ENCODE measurements at regions of chr21 and their contacts with region 1.

Region 1: GRCh38 chr21:34745557-34746255 is 76.9 kb downstream of the CLIC6 start:
- DNase-seq: peak; percentile 87

Region 2: DNA sequence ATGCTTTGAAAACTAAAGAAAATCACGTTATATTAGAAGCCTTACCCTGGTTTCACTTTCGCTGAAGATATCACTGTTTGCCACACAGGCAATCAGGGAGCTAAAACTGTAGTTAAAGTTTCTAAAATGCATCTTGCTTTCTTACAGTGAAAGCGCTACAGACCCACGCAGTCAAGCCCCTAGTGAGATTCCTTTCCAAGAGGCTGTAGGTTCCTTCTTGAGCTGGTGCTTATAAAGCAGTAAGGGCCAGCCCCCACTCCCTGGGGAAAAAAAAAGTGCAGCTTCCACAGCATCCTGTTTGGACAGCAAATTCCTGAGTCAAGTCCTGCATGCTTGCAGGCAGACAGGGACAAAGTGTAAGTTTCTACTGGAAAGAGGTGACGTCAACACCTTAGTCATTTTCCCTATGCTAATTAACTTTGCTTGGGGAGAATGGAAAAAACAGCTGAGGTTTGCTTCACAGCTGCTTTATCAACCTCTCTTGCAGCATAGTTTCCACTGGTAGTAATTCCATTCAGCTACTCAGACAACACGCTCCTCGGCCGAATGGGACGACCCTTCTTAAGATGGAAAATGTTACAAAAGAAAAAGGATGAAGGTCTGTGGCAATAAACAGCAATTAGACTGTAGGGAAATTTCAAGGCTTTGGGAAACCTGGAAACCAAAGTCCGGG is 219.0 kb before region 1 on chr21:
- CTCF ChIA-PET with region 1: no interaction called
- POLR2A ChIA-PET with region 1: no interaction called
- DNase-seq: peak; percentile 75

Region 3: GRCh38 chr21:35400233-35400957 is 654.7 kb after region 1 on chr21:
- CTCF ChIA-PET with region 1: interaction called, 11 read pairs
- POLR2A ChIA-PET with region 1: no interaction called
- DNase-seq: peak; percentile 25